Naive thymus-derived CD4-positive, alpha-beta T cell (primary cell): ENCODE measurements at regions of chr9 and their contacts with region 1.

Region 1: GRCh38 chr9:132354637-132355355 is at the start of gene SETX:
- DNase-seq: peak; percentile 80 to 96 (median 88)
- ATAC-seq: peak; percentile 95
- H3K4me3 ChIP-seq: peak within 1 kb of the TSS; percentile 96
- H3K4me3 Mint-ChIP-seq: peak within 1 kb of the TSS; percentile 78 to 97 (median 94)
- H3K27ac ChIP-seq: peak within 1 kb of the TSS; percentile 94
- H3K27ac Mint-ChIP-seq: peak within 1 kb of the TSS; percentile 68 to 99 (median 97)
- H3K4me1 ChIP-seq: peaks cover 35 to 39% of the 10 kb centered on the region in 2 donors
- H3K4me1 Mint-ChIP-seq: peaks cover 24 to 48% (median 45%) of the 10 kb centered on the region in 7 donors
- H3K27me3 ChIP-seq: no peaks in the 10 kb centered on the region
- H3K27me3 Mint-ChIP-seq: peaks cover 0 to 3% (median 0%) of the 10 kb centered on the region in 5 donors
- total RNA-seq, gene SETX: 52.0 to 83.2 (median 70.2) TPM

Region 2: DNA sequence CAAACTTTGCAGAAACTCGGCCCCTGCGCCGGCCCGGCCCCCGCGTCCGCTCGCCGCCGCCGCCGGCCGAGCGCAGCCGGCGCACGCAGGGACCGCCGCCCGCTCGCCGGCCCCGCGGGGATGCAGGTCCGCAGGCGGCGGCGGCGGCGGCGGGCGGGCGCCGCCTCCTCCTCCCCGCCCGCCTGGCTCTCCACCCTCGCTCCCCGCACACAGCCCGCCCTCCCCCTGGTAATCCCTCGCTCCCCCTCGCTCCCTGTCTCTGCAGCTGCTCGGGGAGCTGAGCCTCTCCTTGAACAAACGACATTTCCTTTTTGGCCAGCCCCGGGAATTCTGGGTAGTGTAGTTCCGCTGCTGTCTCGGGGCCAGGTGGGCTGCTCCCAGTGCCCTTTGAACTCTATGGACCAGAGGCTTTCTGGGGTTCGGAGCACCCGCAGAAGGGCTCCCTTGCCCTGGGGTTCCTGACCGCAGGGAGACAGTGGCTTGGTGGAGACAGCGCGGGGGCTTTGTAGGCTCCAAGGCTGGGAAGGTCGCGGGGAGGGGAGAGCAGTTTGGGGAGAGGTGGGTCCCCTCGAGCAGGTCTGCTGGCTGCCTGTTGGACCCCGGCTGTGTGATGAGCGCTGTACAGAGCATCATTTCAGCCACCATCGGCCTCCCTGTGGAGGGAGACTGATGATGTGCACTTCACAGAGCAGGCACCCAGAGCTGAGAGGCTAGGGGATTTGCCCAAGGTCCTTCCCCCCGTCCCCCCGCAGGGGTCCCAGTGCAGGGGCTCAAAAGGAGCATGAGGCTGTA is 1076.7 kb before region 1 on chr9:
- CTCF ChIA-PET with region 1: no interaction called
- POLR2A ChIA-PET with region 1: no interaction called
- intact Hi-C with region 1: loop called in 1 of 2 experiments (anchors 10 kb)
- DNase-seq: peak in 8 of 9 donors; percentile 47 to 77 (median 62)
- ATAC-seq: peak; percentile 67
- H3K4me3 ChIP-seq: peak overlapping the region; percentile 55
- H3K4me3 Mint-ChIP-seq: peak overlapping the region; percentile 83 to 97 (median 88)
- H3K27ac ChIP-seq: peak overlapping the region; percentile 96
- H3K27ac Mint-ChIP-seq: peak overlapping the region; percentile 84 to 95 (median 91)
- H3K4me1 ChIP-seq: peaks cover 21 to 23% of the 10 kb centered on the region in 2 donors
- H3K4me1 Mint-ChIP-seq: peaks cover 17 to 34% (median 27%) of the 10 kb centered on the region in 7 donors
- H3K27me3 ChIP-seq: no peaks in the 10 kb centered on the region
- H3K27me3 Mint-ChIP-seq: peaks cover 0 to 18% (median 0%) of the 10 kb centered on the region in 5 donors

Region 3: DNA sequence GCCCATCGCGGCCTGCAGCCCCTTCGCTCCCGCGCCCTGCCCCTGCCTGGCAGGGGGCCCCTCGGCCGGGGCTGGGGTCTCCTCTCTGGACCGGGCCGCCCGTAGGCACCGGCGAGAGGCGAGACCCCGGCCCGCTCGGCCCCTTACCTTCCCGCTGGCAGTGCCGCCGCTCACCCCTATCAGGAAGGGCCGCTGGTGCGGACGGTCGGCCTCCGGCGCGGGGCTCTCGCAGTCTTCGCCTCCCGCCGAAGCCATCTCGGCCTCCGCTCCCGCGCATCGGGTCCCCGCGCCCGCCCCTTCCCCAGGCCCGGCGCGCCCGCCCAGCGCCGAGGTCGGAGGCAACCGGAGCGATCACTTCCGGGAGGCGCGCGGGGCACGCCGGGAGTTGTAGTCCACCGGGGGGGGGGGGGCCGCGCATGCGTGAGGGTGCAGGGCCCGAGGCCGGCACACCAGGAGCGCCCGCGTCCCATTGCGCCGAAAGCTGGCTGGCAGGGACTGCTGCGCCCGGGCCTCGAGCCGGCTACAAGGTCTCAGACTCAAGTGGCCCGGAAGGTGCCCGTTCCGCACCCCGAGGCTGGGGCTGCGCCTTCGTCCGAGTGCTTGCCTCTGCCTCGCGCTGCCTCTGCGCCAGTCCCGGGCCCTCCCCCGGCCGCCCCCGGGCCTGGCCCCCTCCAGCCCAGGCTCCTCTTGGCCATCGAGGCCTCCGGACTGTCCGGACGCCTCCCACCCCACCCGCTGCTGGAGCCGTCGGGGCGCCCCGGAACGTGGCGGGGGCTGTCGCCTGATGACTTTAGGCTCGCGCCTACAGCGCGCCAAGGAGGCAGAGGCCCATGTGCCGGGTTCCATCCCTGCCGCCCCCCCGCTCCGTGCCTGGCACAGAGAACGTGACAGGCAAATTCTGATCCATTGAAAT is 823.6 kb before region 1 on chr9 and contains the start of gene UCK1:
- CTCF ChIA-PET with region 1: no interaction called
- POLR2A ChIA-PET with region 1: no interaction called
- intact Hi-C with region 1: loop called in 1 of 2 experiments (anchors 10 kb)
- DNase-seq: peak; percentile 58 to 84 (median 71)
- ATAC-seq: peak; percentile 97
- H3K4me3 ChIP-seq: peak within 1 kb of the TSS; percentile 63
- H3K4me3 Mint-ChIP-seq: peak within 1 kb of the TSS; percentile 59 to 84 (median 77)
- H3K27ac ChIP-seq: peak within 1 kb of the TSS; percentile 90
- H3K27ac Mint-ChIP-seq: peak within 1 kb of the TSS in 6 of 9 donors; percentile 46 to 85 (median 68)
- H3K4me1 ChIP-seq: peaks cover 21 to 30% of the 10 kb centered on the region in 2 donors
- H3K4me1 Mint-ChIP-seq: peaks cover 15 to 46% (median 34%) of the 10 kb centered on the region in 7 donors
- H3K27me3 ChIP-seq: no peaks in the 10 kb centered on the region
- H3K27me3 Mint-ChIP-seq: no peaks in the 10 kb centered on the region
- total RNA-seq, gene UCK1: 21.8 to 40.1 (median 29.3) TPM

Region 4: GRCh38 chr9:132079391-132080091 is 275.3 kb before region 1 on chr9 and contains the start of gene MED27:
- CTCF ChIA-PET with region 1: no interaction called
- POLR2A ChIA-PET with region 1: no interaction called
- intact Hi-C with region 1: loop called in 1 of 2 experiments (anchors 10 kb)
- DNase-seq: peak; percentile 79 to 94 (median 90)
- ATAC-seq: peak; percentile 98
- H3K4me3 ChIP-seq: peak within 1 kb of the TSS; percentile 77
- H3K4me3 Mint-ChIP-seq: peak within 1 kb of the TSS; percentile 93 to 99 (median 98)
- H3K27ac ChIP-seq: peak within 1 kb of the TSS; percentile 72
- H3K27ac Mint-ChIP-seq: peak within 1 kb of the TSS; percentile 69 to 96 (median 92)
- H3K4me1 ChIP-seq: peaks cover 13 to 15% of the 10 kb centered on the region in 2 donors
- H3K4me1 Mint-ChIP-seq: peaks cover 31 to 53% (median 49%) of the 10 kb centered on the region in 7 donors
- H3K27me3 ChIP-seq: no peaks in the 10 kb centered on the region
- H3K27me3 Mint-ChIP-seq: peaks cover 0 to 7% (median 4%) of the 10 kb centered on the region in 5 donors
- total RNA-seq, gene MED27: 11.5 to 26.9 (median 21.3) TPM

Region 5: GRCh38 chr9:132293145-132293721 is 61.6 kb before region 1 on chr9:
- CTCF ChIA-PET with region 1: no interaction called
- POLR2A ChIA-PET with region 1: no interaction called
- intact Hi-C with region 1: no loop called
- DNase-seq: peak in 4 of 9 donors; percentile 7 to 29 (median 16)
- ATAC-seq: peak; percentile 48
- H3K4me3 ChIP-seq: no peak overlapping the region
- H3K4me3 Mint-ChIP-seq: peak overlapping the region in 8 of 10 donors; percentile 14 to 57 (median 39)
- H3K27ac ChIP-seq: peak overlapping the region; percentile 49
- H3K27ac Mint-ChIP-seq: peak overlapping the region; percentile 49 to 81 (median 66)
- H3K4me1 ChIP-seq: no peaks in the 10 kb centered on the region
- H3K4me1 Mint-ChIP-seq: peaks cover 8 to 46% (median 32%) of the 10 kb centered on the region in 7 donors
- H3K27me3 ChIP-seq: no peaks in the 10 kb centered on the region
- H3K27me3 Mint-ChIP-seq: no peaks in the 10 kb centered on the region

Region 6: DNA sequence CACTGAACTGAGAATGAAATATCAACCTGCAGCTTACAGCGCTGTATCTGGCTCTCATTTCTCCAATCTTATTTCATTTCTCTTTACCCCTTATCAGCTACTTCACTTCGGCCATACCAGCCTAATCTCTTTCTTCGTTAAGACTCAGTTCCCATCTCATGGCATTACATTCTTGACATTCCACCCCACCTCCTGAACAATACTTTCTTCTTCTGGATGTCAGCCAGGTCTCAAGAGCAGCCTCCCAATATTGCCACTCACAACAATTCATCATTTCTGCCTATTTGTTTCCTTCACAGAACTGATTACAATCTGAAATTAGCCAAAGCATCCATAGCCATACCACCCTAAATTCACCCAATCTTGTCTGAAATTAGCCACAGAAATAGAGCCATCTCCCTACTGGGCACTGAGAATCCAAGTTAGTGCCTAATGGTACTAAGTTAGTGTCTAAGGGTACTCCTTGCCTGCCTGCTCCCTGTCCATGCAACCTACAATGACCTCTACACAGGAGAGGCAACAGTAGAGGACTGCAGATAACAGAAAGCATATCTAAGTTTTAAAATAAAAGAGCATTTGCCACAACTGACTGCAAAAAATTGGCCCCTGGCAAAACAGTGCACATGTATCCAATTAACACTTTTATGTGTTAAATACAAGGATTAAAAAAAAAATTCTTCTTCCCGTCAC is 35.2 kb before region 1 on chr9:
- CTCF ChIA-PET with region 1: no interaction called
- POLR2A ChIA-PET with region 1: no interaction called
- intact Hi-C with region 1: no loop called
- DNase-seq: no peak
- ATAC-seq: no peak
- H3K4me3 ChIP-seq: no peak overlapping the region
- H3K4me3 Mint-ChIP-seq: peak overlapping the region in 1 of 10 donors; percentile 38
- H3K27ac ChIP-seq: no peak overlapping the region
- H3K27ac Mint-ChIP-seq: peak overlapping the region in 7 of 9 donors; percentile 38 to 78 (median 52)
- H3K4me1 ChIP-seq: peaks cover 0 to 30% of the 10 kb centered on the region in 2 donors
- H3K4me1 Mint-ChIP-seq: peaks cover 27 to 49% (median 33%) of the 10 kb centered on the region in 7 donors
- H3K27me3 ChIP-seq: no peaks in the 10 kb centered on the region
- H3K27me3 Mint-ChIP-seq: no peaks in the 10 kb centered on the region

Region 7: GRCh38 chr9:132372177-132373095 is 17.6 kb after region 1 on chr9:
- CTCF ChIA-PET with region 1: no interaction called
- POLR2A ChIA-PET with region 1: interaction called, 3 read pairs
- intact Hi-C with region 1: loop called in 1 of 2 experiments (anchors 2 kb)
- DNase-seq: no peak
- ATAC-seq: peak; percentile 85
- H3K4me3 ChIP-seq: no peak overlapping the region
- H3K4me3 Mint-ChIP-seq: peak overlapping the region in 6 of 10 donors; percentile 7 to 64 (median 36)
- H3K27ac ChIP-seq: no peak overlapping the region
- H3K27ac Mint-ChIP-seq: peak overlapping the region in 8 of 9 donors; percentile 58 to 88 (median 78)
- H3K4me1 ChIP-seq: no peaks in the 10 kb centered on the region
- H3K4me1 Mint-ChIP-seq: peaks cover 12 to 21% (median 14%) of the 10 kb centered on the region in 7 donors
- H3K27me3 ChIP-seq: no peaks in the 10 kb centered on the region
- H3K27me3 Mint-ChIP-seq: no peaks in the 10 kb centered on the region

Region 8: DNA sequence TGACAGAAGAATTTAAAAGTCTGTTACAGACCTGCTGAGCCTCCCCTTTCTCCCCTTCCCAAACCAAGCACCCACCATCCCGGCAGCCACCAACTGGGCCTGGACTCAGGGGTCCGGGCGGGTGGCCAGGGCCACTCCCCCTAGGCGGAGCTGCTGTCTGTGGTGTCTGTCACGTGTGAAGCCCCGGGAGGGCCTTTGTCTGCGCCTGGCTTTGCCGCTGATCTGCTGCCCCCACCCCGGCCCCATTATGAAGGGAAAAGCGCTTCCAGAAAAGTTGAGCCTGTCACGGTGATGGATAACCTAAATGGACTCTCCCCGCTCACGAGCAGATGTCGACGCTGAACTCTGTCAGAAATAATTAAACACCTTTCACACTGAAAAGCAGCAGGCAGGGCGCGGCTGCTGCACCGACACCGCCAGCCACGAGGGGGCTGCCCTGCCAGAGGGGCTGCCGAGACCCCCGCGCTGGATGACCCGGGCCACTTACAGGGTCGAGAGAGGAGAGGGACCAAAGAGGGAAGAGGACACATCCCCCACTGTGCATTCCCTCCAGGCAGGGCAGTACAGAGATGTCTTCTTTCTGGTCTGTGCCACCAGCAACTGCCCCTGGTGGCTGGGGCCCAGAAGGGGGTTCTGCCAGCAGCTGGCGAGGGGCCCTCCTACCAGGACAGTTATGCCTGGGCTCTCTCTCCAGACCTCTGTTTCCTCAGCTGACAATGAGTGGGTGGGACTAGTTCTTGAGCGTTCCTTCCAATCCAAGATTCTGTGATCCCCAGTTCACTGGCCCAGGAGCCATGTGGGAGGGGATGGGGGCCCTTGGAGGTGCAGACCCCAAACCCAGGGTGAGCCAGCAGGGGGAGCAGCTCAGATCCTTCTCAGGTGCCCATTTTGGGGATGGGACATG is 191.6 kb after region 1 on chr9:
- CTCF ChIA-PET with region 1: no interaction called
- POLR2A ChIA-PET with region 1: no interaction called
- intact Hi-C with region 1: no loop called
- DNase-seq: no peak
- ATAC-seq: no peak
- H3K4me3 ChIP-seq: no peak overlapping the region
- H3K4me3 Mint-ChIP-seq: peak overlapping the region in 1 of 10 donors; percentile 26
- H3K27ac ChIP-seq: no peak overlapping the region
- H3K27ac Mint-ChIP-seq: no peak overlapping the region
- H3K4me1 ChIP-seq: no peaks in the 10 kb centered on the region
- H3K4me1 Mint-ChIP-seq: no peaks in the 10 kb centered on the region
- H3K27me3 ChIP-seq: no peaks in the 10 kb centered on the region
- H3K27me3 Mint-ChIP-seq: peaks cover 4 to 26% (median 14%) of the 10 kb centered on the region in 5 donors

Region 9: DNA sequence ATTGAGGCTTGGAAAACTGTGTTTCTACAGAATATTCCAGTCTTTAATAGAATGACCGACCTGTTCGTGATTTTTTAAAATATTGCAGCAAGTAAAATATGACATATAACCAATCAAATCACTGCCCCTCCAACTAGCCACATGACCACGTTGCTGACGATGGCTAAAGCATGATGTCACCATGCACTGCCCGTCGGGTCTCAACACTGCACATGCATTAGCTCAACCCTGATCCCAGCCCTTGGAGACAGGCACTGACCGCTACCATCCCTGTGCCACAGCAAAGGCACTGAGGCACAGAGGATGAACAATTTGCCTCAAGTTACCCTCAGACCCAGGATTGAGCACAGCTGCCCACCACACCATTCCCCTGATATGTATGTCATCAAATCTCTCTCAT is 301.5 kb after region 1 on chr9:
- CTCF ChIA-PET with region 1: no interaction called
- POLR2A ChIA-PET with region 1: no interaction called
- intact Hi-C with region 1: no loop called
- DNase-seq: no peak
- ATAC-seq: no peak
- H3K4me3 ChIP-seq: no peak overlapping the region
- H3K4me3 Mint-ChIP-seq: no peak overlapping the region
- H3K27ac ChIP-seq: no peak overlapping the region
- H3K27ac Mint-ChIP-seq: peak overlapping the region in 1 of 9 donors; percentile 10
- H3K4me1 ChIP-seq: no peaks in the 10 kb centered on the region
- H3K4me1 Mint-ChIP-seq: peaks cover 4 to 10% (median 5%) of the 10 kb centered on the region in 7 donors
- H3K27me3 ChIP-seq: no peaks in the 10 kb centered on the region
- H3K27me3 Mint-ChIP-seq: no peaks in the 10 kb centered on the region

Region 10: DNA sequence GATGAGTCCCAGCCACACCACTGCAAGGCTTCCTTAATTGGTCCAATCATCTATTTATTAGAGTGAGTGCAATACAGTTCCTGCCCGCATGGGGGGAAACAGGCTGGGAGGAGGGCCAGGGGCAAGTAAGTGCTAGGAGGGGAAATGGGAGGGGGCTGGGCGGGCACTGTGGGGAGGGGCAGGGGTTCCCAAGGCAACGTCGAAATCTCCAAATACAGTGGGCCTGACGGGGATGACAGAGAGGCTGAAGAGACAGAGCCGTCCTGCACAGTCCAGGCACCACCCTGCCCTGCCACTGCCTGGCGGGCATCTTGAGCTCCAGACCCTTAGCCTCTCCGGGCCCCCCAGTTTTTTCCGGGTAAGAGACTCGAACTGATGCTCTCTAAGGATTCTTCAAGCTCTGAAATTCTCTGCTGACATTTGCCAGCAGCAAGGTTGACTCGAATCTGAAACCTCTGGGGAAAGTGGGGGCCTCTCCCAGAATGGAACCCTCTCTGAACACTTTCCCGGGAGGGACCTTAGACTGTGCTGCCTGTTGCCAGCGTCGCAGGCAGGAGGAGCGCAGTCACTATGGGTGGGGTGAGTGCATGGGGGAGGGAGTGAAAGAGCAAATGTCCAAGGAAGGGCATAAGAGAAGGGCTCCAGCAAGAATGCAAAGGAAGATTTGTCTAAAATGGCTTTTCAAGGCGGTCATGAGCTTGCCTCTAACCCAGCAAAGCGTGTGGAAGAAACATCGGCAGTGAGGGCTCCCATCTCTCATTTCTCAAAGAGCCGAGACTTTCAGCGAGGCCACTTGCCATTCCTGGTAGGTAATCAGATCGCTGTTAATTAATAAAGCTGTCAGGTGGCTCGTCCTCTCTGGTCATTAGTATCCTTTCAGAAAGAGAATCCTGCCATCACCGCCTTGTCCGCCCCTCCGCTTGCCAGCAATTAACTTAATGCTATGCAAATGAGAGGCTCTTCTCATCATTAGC is 414.4 kb after region 1 on chr9:
- CTCF ChIA-PET with region 1: no interaction called
- POLR2A ChIA-PET with region 1: no interaction called
- intact Hi-C with region 1: loop called in 1 of 2 experiments (anchors 1 kb)
- DNase-seq: peak in 8 of 9 donors; percentile 42 to 69 (median 60)
- ATAC-seq: peak; percentile 86
- H3K4me3 ChIP-seq: peak overlapping the region; percentile 86
- H3K4me3 Mint-ChIP-seq: peak overlapping the region; percentile 95 to 100 (median 98)
- H3K27ac ChIP-seq: peak overlapping the region; percentile 77
- H3K27ac Mint-ChIP-seq: peak overlapping the region; percentile 90 to 99 (median 97)
- H3K4me1 ChIP-seq: peaks cover 3 to 9% of the 10 kb centered on the region in 2 donors
- H3K4me1 Mint-ChIP-seq: peaks cover 8 to 37% (median 27%) of the 10 kb centered on the region in 7 donors
- H3K27me3 ChIP-seq: no peaks in the 10 kb centered on the region
- H3K27me3 Mint-ChIP-seq: peaks cover 0 to 20% (median 0%) of the 10 kb centered on the region in 5 donors

Region 11: DNA sequence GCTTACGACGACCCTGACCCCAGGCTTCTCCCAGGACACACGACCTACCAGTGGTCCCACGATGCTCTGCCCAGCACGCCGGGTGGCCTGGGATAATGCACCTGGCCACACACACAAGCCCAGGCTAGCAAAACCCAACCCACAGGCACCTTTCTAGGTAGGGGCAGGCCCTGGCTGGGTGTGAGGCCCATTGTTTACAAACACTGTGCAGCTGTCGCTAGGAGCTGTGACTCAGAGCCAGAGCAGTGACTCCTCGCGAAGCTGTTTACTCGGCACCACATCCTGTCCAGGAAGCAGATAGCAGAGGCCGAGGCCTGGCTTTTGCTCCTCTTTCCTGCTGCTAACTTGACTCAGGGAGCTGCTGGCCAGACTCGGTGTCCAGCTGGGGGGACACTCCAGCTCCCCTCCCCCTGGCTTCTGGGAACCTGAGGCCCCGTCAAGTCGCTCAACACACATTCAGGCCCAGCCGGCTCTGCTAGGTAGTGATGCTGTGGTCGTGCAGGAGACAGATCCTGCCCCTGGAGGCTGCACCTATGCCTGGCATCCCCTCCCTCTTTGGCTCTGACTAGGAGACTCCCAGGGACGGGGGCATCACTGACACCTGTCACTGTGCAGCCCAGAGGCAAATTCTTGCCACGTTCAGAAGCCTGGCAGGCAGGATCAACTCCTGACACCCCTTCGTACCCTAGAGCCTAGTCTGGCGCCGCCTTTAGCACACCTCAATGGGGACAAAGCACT is 779.1 kb after region 1 on chr9:
- CTCF ChIA-PET with region 1: no interaction called
- POLR2A ChIA-PET with region 1: no interaction called
- intact Hi-C with region 1: loop called in 1 of 2 experiments (anchors 10 kb)
- DNase-seq: peak; percentile 69 to 94 (median 90)
- ATAC-seq: peak; percentile 92
- H3K4me3 ChIP-seq: peak overlapping the region; percentile 20
- H3K4me3 Mint-ChIP-seq: peak overlapping the region; percentile 72 to 85 (median 80)
- H3K27ac ChIP-seq: peak overlapping the region; percentile 92
- H3K27ac Mint-ChIP-seq: peak overlapping the region; percentile 99 to 100 (median 100)
- H3K4me1 ChIP-seq: peaks cover 57 to 68% of the 10 kb centered on the region in 2 donors
- H3K4me1 Mint-ChIP-seq: peaks cover 31 to 75% (median 63%) of the 10 kb centered on the region in 7 donors
- H3K27me3 ChIP-seq: no peaks in the 10 kb centered on the region
- H3K27me3 Mint-ChIP-seq: no peaks in the 10 kb centered on the region